Activated CD8-positive, alpha-beta memory T cell treated with anti-CD3 and anti-CD28 coated beads, Interleukin-2, amount 10 ng/mL, durations not matched to agents 7 days and 5 days (primary cell): ENCODE measurements at regions of chr10 and their contacts with region 1.

Region 1: GRCh38 chr10:62816331-62817120 is at the start of gene EGR2:
- DNase-seq: peak; percentile 97
- ATAC-seq: peak; percentile 81
- H3K4me3 Mint-ChIP-seq: peak within 1 kb of the TSS; percentile 83
- H3K27ac Mint-ChIP-seq: peak within 1 kb of the TSS; percentile 92
- H3K4me1 Mint-ChIP-seq: peaks cover 44% of the 10 kb centered on the region
- H3K27me3 Mint-ChIP-seq: peaks cover 76% of the 10 kb centered on the region
- total RNA-seq, gene EGR2: 4.7 to 21.6 TPM

Region 2: DNA sequence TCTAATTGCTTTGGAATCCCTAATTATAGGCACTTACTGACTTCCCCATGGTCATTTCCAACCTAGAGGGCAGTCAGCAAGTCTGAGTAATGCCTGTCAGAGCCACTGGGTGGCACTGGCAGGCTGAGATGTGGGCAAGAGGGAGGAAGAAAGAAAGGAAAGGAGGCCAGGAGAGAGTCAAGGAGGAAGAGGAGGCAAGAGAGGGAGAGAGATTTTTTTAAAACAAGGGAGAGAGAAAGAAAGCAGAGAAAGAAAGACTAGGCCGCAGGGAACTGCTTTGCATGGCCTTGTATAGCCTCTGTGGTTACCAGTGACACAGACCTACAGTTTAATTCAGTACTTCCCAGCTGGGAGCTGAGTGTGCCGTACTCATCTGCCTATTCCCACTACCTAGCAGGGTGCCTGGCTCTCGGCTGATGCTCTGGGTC is 222.4 kb before region 1 on chr10:
- CTCF ChIA-PET with region 1: interaction called, 29 read pairs
- DNase-seq: peak; percentile 61
- ATAC-seq: peak; percentile 73
- H3K4me3 Mint-ChIP-seq: no peak overlapping the region
- H3K27ac Mint-ChIP-seq: no peak overlapping the region
- H3K4me1 Mint-ChIP-seq: peaks cover 5% of the 10 kb centered on the region
- H3K27me3 Mint-ChIP-seq: peaks cover 29% of the 10 kb centered on the region

Region 3: GRCh38 chr10:62637249-62638061 is 179.1 kb before region 1 on chr10:
- CTCF ChIA-PET with region 1: interaction called, 35 read pairs
- DNase-seq: peak; percentile 87
- ATAC-seq: peak; percentile 96
- H3K4me3 Mint-ChIP-seq: no peak overlapping the region
- H3K27ac Mint-ChIP-seq: no peak overlapping the region
- H3K4me1 Mint-ChIP-seq: peaks cover 11% of the 10 kb centered on the region
- H3K27me3 Mint-ChIP-seq: peaks cover 3% of the 10 kb centered on the region

Region 4: GRCh38 chr10:62804356-62805230 is 11.9 kb before region 1 on chr10 and contains the start of gene ADO:
- CTCF ChIA-PET with region 1: interaction called, 50 read pairs
- DNase-seq: peak; percentile 85
- ATAC-seq: peak; percentile 85
- H3K4me3 Mint-ChIP-seq: peak within 1 kb of the TSS; percentile 93
- H3K27ac Mint-ChIP-seq: peak within 1 kb of the TSS; percentile 100
- H3K4me1 Mint-ChIP-seq: peaks cover 35% of the 10 kb centered on the region
- H3K27me3 Mint-ChIP-seq: peaks cover 18% of the 10 kb centered on the region
- total RNA-seq, gene ADO: 19.4 to 25.9 TPM

Region 5: GRCh38 chr10:62851442-62851841 is 34.9 kb after region 1 on chr10:
- CTCF ChIA-PET with region 1: interaction called, 39 read pairs
- DNase-seq: no peak
- ATAC-seq: no peak
- H3K4me3 Mint-ChIP-seq: no peak overlapping the region
- H3K27ac Mint-ChIP-seq: peak overlapping the region; percentile 13
- H3K4me1 Mint-ChIP-seq: peaks cover 55% of the 10 kb centered on the region
- H3K27me3 Mint-ChIP-seq: peaks cover 10% of the 10 kb centered on the region

Region 6: DNA sequence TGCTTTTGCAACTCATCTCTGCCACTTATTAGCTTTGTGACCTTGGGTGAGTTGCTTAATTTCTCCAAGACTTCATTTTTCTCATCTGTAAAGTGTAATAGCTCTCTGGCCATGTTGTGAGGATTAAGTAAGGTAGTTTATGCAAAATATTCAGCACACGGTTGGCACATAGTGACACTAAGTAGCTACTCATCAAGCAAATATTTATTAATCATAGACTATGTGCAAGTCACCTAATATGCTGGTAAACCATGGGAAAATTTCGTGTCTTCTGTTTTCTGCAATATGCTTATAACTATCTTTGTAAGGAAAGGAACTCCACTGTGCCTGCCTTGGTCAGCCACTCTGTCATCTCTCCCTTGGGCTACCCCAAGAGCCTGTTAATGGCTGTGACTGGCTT is 49.9 kb after region 1 on chr10:
- CTCF ChIA-PET with region 1: no interaction called
- DNase-seq: no peak
- ATAC-seq: no peak
- H3K4me3 Mint-ChIP-seq: no peak overlapping the region
- H3K27ac Mint-ChIP-seq: no peak overlapping the region
- H3K4me1 Mint-ChIP-seq: peaks cover 9% of the 10 kb centered on the region
- H3K27me3 Mint-ChIP-seq: no peaks in the 10 kb centered on the region